Natural killer cell (primary cell): ENCODE measurements at regions of chr3 and their contacts with region 1.

Region 1: GRCh38 chr3:27712136-27713077 is 9.7 kb downstream of the EOMES start:
- DNase-seq: peak; percentile 72 to 90
- ATAC-seq: peak; percentile 84 to 91 (median 87)
- H3K4me3 ChIP-seq: peak overlapping the region; percentile 50
- H3K4me3 Mint-ChIP-seq: peak overlapping the region; percentile 100
- H3K27ac ChIP-seq: peak overlapping the region; percentile 81
- H3K27ac Mint-ChIP-seq: peak overlapping the region; percentile 93 to 98
- H3K4me1 ChIP-seq: peaks cover 34% of the 10 kb centered on the region
- H3K4me1 Mint-ChIP-seq: peaks cover 56 to 58% of the 10 kb centered on the region in 2 donors
- H3K27me3 ChIP-seq: no peaks in the 10 kb centered on the region
- H3K27me3 Mint-ChIP-seq: no peaks in the 10 kb centered on the region
- CTCF ChIP-seq: peak; percentile 84

Region 2: GRCh38 chr3:27484015-27484844 is 228.2 kb before region 1 on chr3 and contains the start of gene SLC4A7:
- intact Hi-C with region 1: loop called (anchors 5 kb)
- DNase-seq: peak; percentile 98 to 99
- ATAC-seq: peak; percentile 91 to 99 (median 93)
- H3K4me3 ChIP-seq: peak within 1 kb of the TSS; percentile 87
- H3K4me3 Mint-ChIP-seq: peak within 1 kb of the TSS; percentile 100
- H3K27ac ChIP-seq: peak within 1 kb of the TSS; percentile 71
- H3K27ac Mint-ChIP-seq: peak within 1 kb of the TSS; percentile 93 to 96
- H3K4me1 ChIP-seq: peaks cover 39% of the 10 kb centered on the region
- H3K4me1 Mint-ChIP-seq: peaks cover 35 to 38% of the 10 kb centered on the region in 2 donors
- H3K27me3 ChIP-seq: no peaks in the 10 kb centered on the region
- H3K27me3 Mint-ChIP-seq: no peaks in the 10 kb centered on the region
- CTCF ChIP-seq: no peak
- total RNA-seq, gene SLC4A7: 36.4 to 48.0 (median 41.3) TPM

Region 3: GRCh38 chr3:27861046-27862036 is 148.9 kb after region 1 on chr3:
- intact Hi-C with region 1: loop called (anchors 5 kb)
- DNase-seq: peak in 1 of 2 donors; percentile 65
- ATAC-seq: peak; percentile 90 to 99 (median 92)
- H3K4me3 ChIP-seq: no peak overlapping the region
- H3K4me3 Mint-ChIP-seq: peak overlapping the region; percentile 50
- H3K27ac ChIP-seq: peak overlapping the region; percentile 13
- H3K27ac Mint-ChIP-seq: peak overlapping the region; percentile 61 to 69
- H3K4me1 ChIP-seq: peaks cover 26% of the 10 kb centered on the region
- H3K4me1 Mint-ChIP-seq: peaks cover 39 to 40% of the 10 kb centered on the region in 2 donors
- H3K27me3 ChIP-seq: no peaks in the 10 kb centered on the region
- H3K27me3 Mint-ChIP-seq: peaks cover 0 to 3% of the 10 kb centered on the region in 2 donors
- CTCF ChIP-seq: no peak

Region 4: DNA sequence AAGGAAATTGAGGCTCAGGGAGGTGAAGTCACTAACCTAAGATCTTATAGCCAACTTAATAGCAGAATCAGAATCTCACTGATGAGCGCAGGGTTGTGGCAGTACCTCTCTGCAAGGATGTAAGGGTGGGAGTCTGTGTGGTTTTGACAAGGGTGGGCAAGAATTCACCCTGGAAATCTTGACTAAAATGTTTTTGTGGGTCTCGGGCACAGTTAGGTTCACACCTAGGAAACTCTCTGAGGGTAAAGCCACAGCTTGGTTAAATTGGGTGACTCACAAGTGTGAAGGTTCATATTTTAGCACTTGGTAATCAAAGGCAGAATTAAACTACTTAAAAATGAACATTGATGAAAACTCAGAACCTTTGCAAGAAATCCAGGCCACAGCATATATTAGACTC is 187.9 kb after region 1 on chr3:
- intact Hi-C with region 1: loop called (anchors 5 kb)
- DNase-seq: peak; percentile 32 to 64
- ATAC-seq: peak; percentile 79 to 91 (median 83)
- H3K4me3 ChIP-seq: no peak overlapping the region
- H3K4me3 Mint-ChIP-seq: peak overlapping the region; percentile 78
- H3K27ac ChIP-seq: no peak overlapping the region
- H3K27ac Mint-ChIP-seq: peak overlapping the region; percentile 64 to 72
- H3K4me1 ChIP-seq: peaks cover 18% of the 10 kb centered on the region
- H3K4me1 Mint-ChIP-seq: peaks cover 60 to 68% of the 10 kb centered on the region in 2 donors
- H3K27me3 ChIP-seq: no peaks in the 10 kb centered on the region
- H3K27me3 Mint-ChIP-seq: peaks cover 2 to 9% of the 10 kb centered on the region in 2 donors
- CTCF ChIP-seq: no peak

Region 5: GRCh38 chr3:28089527-28089897 is 377.1 kb after region 1 on chr3:
- intact Hi-C with region 1: loop called (anchors 5 kb)
- DNase-seq: peak in 1 of 2 donors; percentile 35
- ATAC-seq: peak; percentile 66 to 86 (median 71)
- H3K4me3 ChIP-seq: no peak overlapping the region
- H3K4me3 Mint-ChIP-seq: peak overlapping the region; percentile 59
- H3K27ac ChIP-seq: peak overlapping the region; percentile 58
- H3K27ac Mint-ChIP-seq: peak overlapping the region; percentile 80 to 84
- H3K4me1 ChIP-seq: peaks cover 13% of the 10 kb centered on the region
- H3K4me1 Mint-ChIP-seq: peaks cover 49 to 51% of the 10 kb centered on the region in 2 donors
- H3K27me3 ChIP-seq: no peaks in the 10 kb centered on the region
- H3K27me3 Mint-ChIP-seq: no peaks in the 10 kb centered on the region
- CTCF ChIP-seq: no peak

Region 6: DNA sequence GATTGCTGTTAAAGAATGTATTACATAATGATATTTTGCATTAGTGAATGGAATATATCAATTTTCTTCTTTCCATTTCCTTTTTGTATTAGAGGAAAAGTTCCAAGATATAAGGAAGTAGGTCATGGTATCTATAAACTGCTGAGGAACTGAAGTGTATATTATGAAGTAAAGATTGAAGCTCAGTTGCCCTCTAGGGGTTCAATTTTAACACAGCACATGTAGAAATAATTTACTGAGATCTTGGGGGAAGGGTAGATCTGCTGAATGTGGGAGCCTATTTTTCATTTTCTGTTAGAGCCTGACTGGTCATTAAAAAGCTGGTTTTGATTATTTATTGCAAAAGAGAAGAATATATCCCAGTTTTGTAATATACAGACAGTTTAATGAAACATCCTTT is 574.2 kb after region 1 on chr3:
- intact Hi-C with region 1: loop called (anchors 2 kb)
- DNase-seq: peak in 1 of 2 donors; percentile 65
- ATAC-seq: peak; percentile 85 to 91 (median 86)
- H3K4me3 ChIP-seq: peak overlapping the region; percentile 2
- H3K4me3 Mint-ChIP-seq: peak overlapping the region; percentile 76
- H3K27ac ChIP-seq: peak overlapping the region; percentile 42
- H3K27ac Mint-ChIP-seq: peak overlapping the region; percentile 75 to 87
- H3K4me1 ChIP-seq: no peaks in the 10 kb centered on the region
- H3K4me1 Mint-ChIP-seq: peaks cover 32 to 36% of the 10 kb centered on the region in 2 donors
- H3K27me3 ChIP-seq: no peaks in the 10 kb centered on the region
- H3K27me3 Mint-ChIP-seq: no peaks in the 10 kb centered on the region
- CTCF ChIP-seq: peak; percentile 79

Region 7: GRCh38 chr3:28348629-28349483 is 636.4 kb after region 1 on chr3 and contains the starts of genes AZI2 and ZCWPW2:
- intact Hi-C with region 1: loop called (anchors 5 kb)
- DNase-seq: peak; percentile 90 to 96
- ATAC-seq: peak; percentile 82 to 96 (median 87)
- H3K4me3 ChIP-seq: peak within 1 kb of the TSS; percentile 97
- H3K4me3 Mint-ChIP-seq: peak within 1 kb of the TSS; percentile 95
- H3K27ac ChIP-seq: peak within 1 kb of the TSS; percentile 98
- H3K27ac Mint-ChIP-seq: peak within 1 kb of the TSS; percentile 93 to 95
- H3K4me1 ChIP-seq: peaks cover 9% of the 10 kb centered on the region
- H3K4me1 Mint-ChIP-seq: peaks cover 40 to 43% of the 10 kb centered on the region in 2 donors
- H3K27me3 ChIP-seq: no peaks in the 10 kb centered on the region
- H3K27me3 Mint-ChIP-seq: no peaks in the 10 kb centered on the region
- CTCF ChIP-seq: no peak
- total RNA-seq, gene AZI2: 29.3 to 38.6 (median 32.0) TPM
- total RNA-seq, gene ZCWPW2: 0.43 TPM in 1 of 3 donors, not detected in the others